ENCODE measurements at regions of chr17 and their contacts with region 1.

Region 1: GRCh38 chr17:63919311-63919723 is 678 bp upstream of the GH1 start:
- DNase-seq: peak; percentile 70 to 81 (median 75)
- H3K4me3 ChIP-seq: no peak overlapping the region
- H3K4me3 Mint-ChIP-seq: no peak overlapping the region
- H3K27ac ChIP-seq: no peak overlapping the region
- H3K27ac Mint-ChIP-seq: peak overlapping the region in 6 of 7 donors; percentile 38 to 87 (median 62)
- H3K4me1 ChIP-seq: peaks cover 7% of the 10 kb centered on the region
- H3K4me1 Mint-ChIP-seq: peaks cover 6% of the 10 kb centered on the region in 4 donors
- H3K27me3 ChIP-seq: no peaks in the 10 kb centered on the region
- H3K27me3 Mint-ChIP-seq: peaks cover 0 to 2% of the 10 kb centered on the region in 2 donors

Region 2: DNA sequence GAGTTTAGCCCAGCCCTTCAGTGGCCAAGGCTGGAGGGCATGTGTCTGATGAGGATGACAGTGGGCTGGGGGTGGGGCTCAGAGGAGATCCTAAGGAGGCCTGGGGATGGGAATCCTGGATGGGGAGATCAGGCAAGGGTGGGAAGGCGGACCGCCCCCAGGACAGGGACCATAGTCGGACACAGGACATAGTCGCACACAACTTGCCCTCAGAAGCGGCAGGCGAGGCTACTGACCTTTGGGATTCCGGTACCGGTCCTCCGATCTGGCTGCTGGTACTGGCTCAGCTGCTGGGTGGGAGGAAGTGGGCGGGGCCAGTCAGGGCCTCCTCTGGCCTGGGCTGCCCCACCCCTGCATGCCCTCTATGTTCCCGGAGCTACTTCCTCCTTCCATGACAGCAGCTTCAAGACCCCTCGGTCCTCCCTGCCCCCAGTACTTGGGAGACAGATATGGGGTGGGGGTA is 11.8 kb after region 1 on chr17:
- CTCF ChIA-PET with region 1: interaction called, 56 read pairs
- POLR2A ChIA-PET with region 1: interaction called, 16 read pairs
- intact Hi-C with region 1: no loop called
- DNase-seq: peak; percentile 43 to 66 (median 49)
- H3K4me3 ChIP-seq: peak overlapping the region; percentile 48 to 51
- H3K4me3 Mint-ChIP-seq: peak overlapping the region; percentile 92 to 98 (median 94)
- H3K27ac ChIP-seq: peak overlapping the region; percentile 71
- H3K27ac Mint-ChIP-seq: peak overlapping the region; percentile 48 to 96 (median 94)
- H3K4me1 ChIP-seq: peaks cover 25% of the 10 kb centered on the region
- H3K4me1 Mint-ChIP-seq: peaks cover 7 to 32% (median 22%) of the 10 kb centered on the region in 4 donors
- H3K27me3 ChIP-seq: no peaks in the 10 kb centered on the region
- H3K27me3 Mint-ChIP-seq: no peaks in the 10 kb centered on the region

Region 3: GRCh38 chr17:63984651-63985386 is 65.5 kb after region 1 on chr17:
- CTCF ChIA-PET with region 1: interaction called, 86 read pairs
- POLR2A ChIA-PET with region 1: interaction called, 7 read pairs
- intact Hi-C with region 1: loop called (anchors 1 kb)
- DNase-seq: peak; percentile 46 to 86 (median 70)
- H3K4me3 ChIP-seq: no peak overlapping the region
- H3K4me3 Mint-ChIP-seq: peak overlapping the region in 5 of 8 donors; percentile 10 to 86 (median 47)
- H3K27ac ChIP-seq: no peak overlapping the region
- H3K27ac Mint-ChIP-seq: peak overlapping the region; percentile 61 to 98 (median 87)
- H3K4me1 ChIP-seq: peaks cover 18% of the 10 kb centered on the region
- H3K4me1 Mint-ChIP-seq: peaks cover 16 to 29% (median 19%) of the 10 kb centered on the region in 4 donors
- H3K27me3 ChIP-seq: no peaks in the 10 kb centered on the region
- H3K27me3 Mint-ChIP-seq: peaks cover 0 to 2% of the 10 kb centered on the region in 2 donors

Region 4: GRCh38 chr17:64032081-64032480 is 112.8 kb after region 1 on chr17:
- CTCF ChIA-PET with region 1: interaction called, 351 read pairs
- POLR2A ChIA-PET with region 1: no interaction called
- intact Hi-C with region 1: no loop called
- DNase-seq: no peak
- H3K4me3 ChIP-seq: no peak overlapping the region
- H3K4me3 Mint-ChIP-seq: no peak overlapping the region
- H3K27ac ChIP-seq: no peak overlapping the region
- H3K27ac Mint-ChIP-seq: peak overlapping the region in 1 of 7 donors; percentile 37
- H3K4me1 ChIP-seq: peaks cover 21% of the 10 kb centered on the region
- H3K4me1 Mint-ChIP-seq: peaks cover 3 to 18% (median 12%) of the 10 kb centered on the region in 4 donors
- H3K27me3 ChIP-seq: no peaks in the 10 kb centered on the region
- H3K27me3 Mint-ChIP-seq: no peaks in the 10 kb centered on the region

Region 5: DNA sequence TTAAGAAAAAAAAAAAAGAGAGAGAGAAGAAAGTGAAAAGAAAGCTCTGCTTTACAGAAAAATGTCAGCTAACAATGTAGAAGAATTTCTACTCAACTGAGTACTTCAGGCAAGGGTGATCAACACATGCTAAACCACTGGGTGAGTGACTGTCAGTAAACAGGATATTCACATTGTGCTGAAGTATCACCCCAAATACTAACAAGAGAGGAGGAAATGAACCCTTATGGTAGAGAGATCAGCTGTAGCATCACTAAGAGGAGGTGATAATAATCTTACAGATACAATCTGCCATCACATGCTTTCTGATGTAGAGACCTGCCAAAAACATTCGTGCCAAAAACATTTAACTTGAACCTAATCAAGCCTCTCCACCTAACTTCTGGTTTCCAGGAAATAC is 131.8 kb after region 1 on chr17:
- CTCF ChIA-PET with region 1: interaction called, 10 read pairs
- POLR2A ChIA-PET with region 1: interaction called, 3 read pairs
- intact Hi-C with region 1: no loop called
- DNase-seq: peak; percentile 50 to 84 (median 73)
- H3K4me3 ChIP-seq: no peak overlapping the region
- H3K4me3 Mint-ChIP-seq: peak overlapping the region in 7 of 8 donors; percentile 37 to 78 (median 68)
- H3K27ac ChIP-seq: peak overlapping the region; percentile 52
- H3K27ac Mint-ChIP-seq: peak overlapping the region; percentile 69 to 96 (median 91)
- H3K4me1 ChIP-seq: peaks cover 56% of the 10 kb centered on the region
- H3K4me1 Mint-ChIP-seq: peaks cover 35 to 76% (median 54%) of the 10 kb centered on the region in 4 donors
- H3K27me3 ChIP-seq: no peaks in the 10 kb centered on the region
- H3K27me3 Mint-ChIP-seq: no peaks in the 10 kb centered on the region

Region 6: GRCh38 chr17:64063766-64064224 is 144.5 kb after region 1 on chr17:
- CTCF ChIA-PET with region 1: interaction called, 13 read pairs
- POLR2A ChIA-PET with region 1: no interaction called
- intact Hi-C with region 1: no loop called
- DNase-seq: peak; percentile 39 to 74 (median 54)
- H3K4me3 ChIP-seq: no peak overlapping the region
- H3K4me3 Mint-ChIP-seq: peak overlapping the region; percentile 67 to 92 (median 88)
- H3K27ac ChIP-seq: peak overlapping the region; percentile 41
- H3K27ac Mint-ChIP-seq: peak overlapping the region; percentile 7 to 97 (median 92)
- H3K4me1 ChIP-seq: peaks cover 89% of the 10 kb centered on the region
- H3K4me1 Mint-ChIP-seq: peaks cover 48 to 100% (median 77%) of the 10 kb centered on the region in 4 donors
- H3K27me3 ChIP-seq: no peaks in the 10 kb centered on the region
- H3K27me3 Mint-ChIP-seq: no peaks in the 10 kb centered on the region

Region 7: GRCh38 chr17:64281962-64282727 is 362.8 kb after region 1 on chr17:
- CTCF ChIA-PET with region 1: interaction called, 3 read pairs
- POLR2A ChIA-PET with region 1: no interaction called
- intact Hi-C with region 1: loop called (anchors 5 kb)
- DNase-seq: peak; percentile 42 to 57 (median 48)
- H3K4me3 ChIP-seq: no peak overlapping the region
- H3K4me3 Mint-ChIP-seq: no peak overlapping the region
- H3K27ac ChIP-seq: no peak overlapping the region
- H3K27ac Mint-ChIP-seq: no peak overlapping the region
- H3K4me1 ChIP-seq: no peaks in the 10 kb centered on the region
- H3K4me1 Mint-ChIP-seq: peaks cover 0 to 2% (median 0%) of the 10 kb centered on the region in 4 donors
- H3K27me3 ChIP-seq: no peaks in the 10 kb centered on the region
- H3K27me3 Mint-ChIP-seq: no peaks in the 10 kb centered on the region